ENCODE measurements at regions of chr3 and their contacts with region 1.

Region 1: DNA sequence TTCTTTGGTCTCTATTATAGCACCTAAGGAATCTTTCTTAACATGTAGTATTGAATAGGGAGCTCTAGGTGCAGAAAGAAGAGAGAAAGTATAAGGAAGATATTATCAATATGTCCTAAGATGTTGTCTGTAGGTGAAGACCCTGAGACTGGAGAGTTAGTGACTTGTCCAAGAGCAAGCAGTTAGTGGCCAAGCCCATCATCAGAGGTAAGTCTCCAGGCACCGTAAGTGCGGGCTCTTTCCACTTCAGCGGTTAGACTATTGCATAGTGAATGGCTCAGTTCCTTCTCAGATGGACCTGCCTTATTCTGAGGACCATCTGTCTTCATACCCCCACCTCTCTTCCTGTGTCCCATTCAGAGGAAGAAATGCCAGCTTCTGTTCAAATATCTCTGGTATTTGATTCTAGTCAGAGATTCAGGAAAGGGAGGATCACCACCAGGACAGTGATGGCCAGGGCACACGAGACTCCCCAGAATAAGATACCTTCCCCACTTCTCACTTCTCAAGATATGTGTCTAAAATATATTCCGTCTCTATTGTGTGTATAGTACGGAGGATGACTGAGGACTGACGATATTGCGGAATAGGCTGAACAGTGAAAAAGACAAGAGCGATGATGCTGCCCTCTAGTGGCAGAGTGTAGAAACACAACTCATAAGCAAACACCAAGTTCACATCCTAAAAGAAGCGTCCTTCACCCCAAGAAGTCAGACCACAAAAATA is 19.1 kb upstream of the ADGRG7 start:
- DNase-seq: no peak

Region 2: DNA sequence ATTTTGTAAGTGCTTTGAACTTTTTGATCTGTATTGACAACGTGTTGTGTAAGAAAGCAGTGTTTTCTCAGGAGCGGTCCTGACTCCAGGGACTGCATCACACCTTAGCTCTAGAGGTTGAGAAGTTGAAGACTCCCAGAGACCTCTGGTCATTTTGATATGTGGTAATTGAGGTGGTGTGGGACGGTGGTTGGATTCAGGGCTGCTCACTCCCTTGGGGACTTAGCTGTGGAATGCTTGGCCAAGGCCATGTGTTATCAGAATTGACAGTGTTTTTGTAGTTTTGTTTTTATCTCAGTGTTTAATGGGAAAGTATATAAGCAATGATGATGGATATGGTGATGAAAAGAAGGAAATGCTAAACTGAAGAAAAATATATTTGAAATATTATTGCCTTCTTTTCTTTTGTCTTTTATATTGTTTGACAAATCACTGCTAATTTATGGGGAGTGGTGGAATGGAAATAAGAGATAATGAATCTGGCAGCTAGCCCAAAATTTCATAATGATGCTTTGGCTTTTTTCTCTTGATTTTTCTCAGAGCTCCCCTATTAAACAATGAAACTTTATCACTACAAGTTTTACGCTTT is 756.6 kb before region 1 on chr3:
- intact Hi-C with region 1: loop called (anchors 10 kb)
- DNase-seq: no peak

Region 3: DNA sequence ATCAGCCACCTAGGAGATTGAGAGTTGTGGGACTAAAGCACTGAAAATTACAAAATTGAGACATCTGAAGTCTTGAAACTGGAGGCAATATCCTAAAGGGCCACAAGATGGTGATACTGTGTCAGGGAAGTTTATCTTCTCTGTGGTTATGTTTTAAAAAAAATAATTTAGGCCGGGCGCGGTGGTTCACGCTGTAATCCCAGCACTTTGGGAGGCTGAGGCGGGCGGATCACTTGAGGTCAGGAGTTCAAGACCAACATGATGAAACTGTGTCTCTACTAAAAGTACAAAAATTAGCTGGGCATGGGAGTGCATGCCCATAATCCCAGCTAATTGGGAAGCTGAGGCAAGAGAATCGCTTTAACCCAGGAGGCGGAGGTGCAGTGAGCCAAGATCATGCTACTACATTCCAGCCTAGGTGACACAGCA is 273.6 kb before region 1 on chr3:
- intact Hi-C with region 1: loop called (anchors 5 kb)
- DNase-seq: no peak

Region 4: DNA sequence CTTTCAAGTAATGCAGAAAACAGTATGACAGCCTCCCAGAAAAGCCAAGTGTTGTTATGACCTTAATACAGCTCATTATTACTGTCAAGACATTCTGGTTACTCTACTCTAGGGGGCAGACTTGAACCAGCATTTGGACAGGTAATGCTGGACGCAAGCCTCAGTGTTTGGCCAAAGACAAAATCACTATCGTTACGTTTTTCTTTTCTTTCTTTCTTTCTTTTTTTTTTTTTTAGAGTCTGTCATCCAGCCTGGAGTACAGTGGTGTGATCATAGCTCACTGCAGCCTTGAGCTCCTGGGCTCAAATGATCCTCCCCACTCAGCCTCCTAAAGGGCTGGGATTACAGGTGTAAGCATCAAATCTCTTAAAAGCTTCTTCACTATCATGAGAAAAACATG is 127.3 kb before region 1 on chr3:
- intact Hi-C with region 1: loop called (anchors 2 kb)
- DNase-seq: no peak

Region 5: DNA sequence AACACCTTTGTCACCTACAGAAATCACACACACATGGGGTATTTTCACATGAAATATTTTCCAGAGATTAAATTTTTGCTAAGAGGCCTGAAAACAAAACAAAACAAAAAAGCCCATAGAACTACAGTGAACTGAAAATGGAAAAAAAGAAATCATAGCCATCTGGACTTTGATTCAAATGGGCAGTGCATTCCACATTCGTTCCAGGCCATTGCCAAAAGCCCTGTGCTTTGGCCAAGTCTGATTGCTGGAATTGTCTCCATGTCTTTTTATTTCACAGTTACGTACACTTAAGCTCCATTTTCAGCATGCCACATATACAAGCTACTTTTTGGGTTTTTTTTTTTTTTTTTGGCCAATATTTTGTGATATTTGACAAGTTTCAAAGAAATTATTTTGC is 166.2 kb after region 1 on chr3:
- intact Hi-C with region 1: no loop called
- DNase-seq: no peak

Measured in cardiac septum (tissue), 1 donor.